KBM-7 (cell line): ENCODE measurements at regions of chr2 and their contacts with region 1.

Region 1: GRCh38 chr2:131492418-131493198 is 411 bp upstream of the MZT2A start:
- DNase-seq: peak; percentile 98

Region 2: DNA sequence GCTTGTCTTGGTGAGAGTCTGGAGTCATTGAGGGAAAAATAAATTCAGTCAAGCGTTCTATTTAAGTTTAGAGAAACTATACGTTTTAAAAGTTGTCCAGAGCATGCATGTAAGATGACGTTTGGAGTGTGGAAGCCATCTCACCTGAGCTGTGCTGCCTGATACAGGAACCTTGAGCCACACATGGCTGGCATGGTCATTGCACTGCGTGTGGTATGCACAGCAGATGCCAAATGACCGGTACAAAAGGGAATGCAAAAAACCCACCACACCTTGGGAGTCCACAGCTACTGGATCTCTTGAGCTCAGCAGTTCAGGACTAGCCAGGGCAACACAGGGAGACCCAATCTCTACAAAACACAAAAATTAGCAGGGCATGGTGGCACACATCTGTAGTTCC is 1306.2 kb before region 1 on chr2:
- in situ Hi-C with region 1: loop called (anchors 5 kb)
- DNase-seq: no peak

Region 3: DNA sequence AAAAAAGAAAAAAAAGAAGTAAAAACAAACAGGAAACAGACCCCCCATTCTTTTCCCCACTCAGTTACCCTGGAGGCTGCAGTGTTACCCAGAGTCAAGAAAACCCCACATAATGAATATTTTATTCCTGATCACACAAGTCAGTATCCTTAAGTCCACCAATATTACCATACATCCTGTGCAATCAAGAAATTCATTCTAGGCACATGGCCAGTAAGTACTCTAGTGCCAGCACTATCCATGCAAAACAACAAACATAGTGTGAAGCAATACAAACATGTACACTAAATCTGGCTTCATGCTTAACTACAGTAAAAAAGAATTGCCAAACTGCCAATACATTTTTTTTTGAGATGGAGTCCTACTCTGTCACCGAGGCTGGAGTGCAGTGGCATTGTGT is 510.9 kb before region 1 on chr2:
- in situ Hi-C with region 1: no loop called
- DNase-seq: no peak

Region 4: GRCh38 chr2:131145040-131145439 is 347.6 kb before region 1 on chr2:
- in situ Hi-C with region 1: loop called (anchors 25 kb)
- DNase-seq: no peak